Dorsolateral prefrontal cortex (tissue), 120 donors: ENCODE measurements at regions of chr5 and their contacts with region 1.

Region 1: GRCh38 chr5:140157032-140157803 is 17.8 kb upstream of the CYSTM1 start:
- DNase-seq: peak; percentile 81 to 91 (median 90)
- H3K4me3 ChIP-seq: peak overlapping the region; percentile 27 to 73 (median 58)
- H3K27ac ChIP-seq: peak overlapping the region; percentile 41 to 93 (median 84)
- H3K27me3 ChIP-seq: no peaks in the 10 kb centered on the region
- CTCF ChIP-seq: peak; percentile 59 to 98 (median 93)

Region 2: GRCh38 chr5:140042643-140043500 is 114.3 kb before region 1 on chr5 and contains the start of gene NRG2:
- intact Hi-C with region 1: loop called in 1 of 2 experiments (anchors 1 kb)
- DNase-seq: peak; percentile 62 to 89 (median 75)
- H3K4me3 ChIP-seq: peak within 1 kb of the TSS; percentile 52 to 88 (median 80)
- H3K27ac ChIP-seq: peak within 1 kb of the TSS; percentile 41 to 94 (median 85)
- H3K27me3 ChIP-seq: no peaks in the 10 kb centered on the region
- CTCF ChIP-seq: peak in 52 of 56 donors; percentile 27 to 77 (median 59)
- total RNA-seq, gene NRG2: 5.8 to 21.5 (median 11.8) TPM

Region 3: GRCh38 chr5:140073296-140073695 is 83.9 kb before region 1 on chr5:
- intact Hi-C with region 1: loop called (anchors 1 kb)
- DNase-seq: no peak
- H3K4me3 ChIP-seq: peak overlapping the region in 22 of 59 donors; percentile 1 to 38 (median 18)
- H3K27ac ChIP-seq: no peak overlapping the region
- H3K27me3 ChIP-seq: no peaks in the 10 kb centered on the region
- CTCF ChIP-seq: peak; percentile 63 to 94 (median 81)

Region 4: DNA sequence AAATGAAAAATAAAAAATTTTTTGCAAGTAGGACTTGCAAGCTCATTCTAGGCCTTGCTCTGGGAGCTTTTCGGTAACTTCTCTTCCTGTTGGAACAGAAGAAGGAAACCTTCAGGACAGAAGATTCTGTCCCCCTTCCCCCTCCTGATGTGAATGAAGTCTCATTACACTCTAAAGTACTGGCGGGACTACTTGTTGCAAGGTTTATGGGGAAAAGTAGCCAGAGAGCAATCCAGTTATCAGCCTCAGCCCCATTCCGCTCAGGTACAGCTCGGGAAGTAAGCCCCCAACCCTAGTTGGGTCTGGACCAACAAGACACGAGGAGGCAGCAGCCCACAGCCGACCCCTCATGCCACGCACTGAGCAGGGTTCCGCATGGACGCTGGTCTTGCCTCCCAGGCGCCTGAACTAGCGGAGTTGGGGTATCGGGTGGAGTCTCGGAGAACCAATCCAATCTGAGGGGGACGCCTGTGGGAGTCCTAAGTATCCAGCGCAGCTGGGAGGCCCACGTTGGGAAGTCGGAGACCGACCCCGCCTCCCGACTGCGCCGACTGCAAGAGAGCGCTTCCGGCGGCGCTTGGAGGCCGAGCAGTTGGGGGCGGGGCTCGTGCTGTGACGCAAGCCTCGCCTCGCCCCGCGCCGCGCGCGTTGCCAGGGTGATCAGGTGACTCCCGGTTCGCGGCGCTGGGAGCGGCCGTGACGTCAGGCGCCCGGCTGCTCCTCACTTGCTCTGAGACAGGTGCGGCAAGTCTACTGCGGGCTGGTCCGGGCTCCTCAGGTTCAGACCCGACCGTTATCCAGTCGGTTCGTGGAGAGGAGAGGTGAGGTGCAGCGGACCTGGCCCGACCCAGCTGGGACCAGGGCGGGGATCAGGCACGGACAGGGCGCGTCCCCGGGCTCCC is 17.5 kb after region 1 on chr5 and contains the start of gene CYSTM1:
- intact Hi-C with region 1: loop called in 1 of 2 experiments (anchors 2 kb)
- DNase-seq: peak; percentile 87 to 95 (median 93)
- H3K4me3 ChIP-seq: peak within 1 kb of the TSS; percentile 74 to 100 (median 97)
- H3K27ac ChIP-seq: peak within 1 kb of the TSS; percentile 63 to 100 (median 96)
- H3K27me3 ChIP-seq: no peaks in the 10 kb centered on the region
- CTCF ChIP-seq: peak in 27 of 56 donors; percentile 11 to 57 (median 24)
- total RNA-seq, gene CYSTM1: 28.2 to 110 (median 55.2) TPM